B cell (primary cell): ENCODE measurements at regions of chr19 and their contacts with region 1.

Region 1: GRCh38 chr19:20923077-20923871 is at the start of gene ZNF85:
- DNase-seq: peak; percentile 92
- ATAC-seq: peak; percentile 98
- H3K4me3 ChIP-seq: peak within 1 kb of the TSS; percentile 48 to 84 (median 69)
- H3K4me3 Mint-ChIP-seq: peak within 1 kb of the TSS; percentile 98
- H3K27ac ChIP-seq: peak within 1 kb of the TSS; percentile 90 to 92
- H3K27ac Mint-ChIP-seq: peak within 1 kb of the TSS; percentile 96
- H3K4me1 ChIP-seq: peaks cover 4 to 9% of the 10 kb centered on the region in 2 donors
- H3K4me1 Mint-ChIP-seq: peaks cover 16% of the 10 kb centered on the region
- H3K27me3 ChIP-seq: no peaks in the 10 kb centered on the region
- H3K27me3 Mint-ChIP-seq: no peaks in the 10 kb centered on the region
- CTCF ChIP-seq: no peak
- total RNA-seq, gene ZNF85: 17.1 and 20.5 TPM in 2 replicates

Region 2: DNA sequence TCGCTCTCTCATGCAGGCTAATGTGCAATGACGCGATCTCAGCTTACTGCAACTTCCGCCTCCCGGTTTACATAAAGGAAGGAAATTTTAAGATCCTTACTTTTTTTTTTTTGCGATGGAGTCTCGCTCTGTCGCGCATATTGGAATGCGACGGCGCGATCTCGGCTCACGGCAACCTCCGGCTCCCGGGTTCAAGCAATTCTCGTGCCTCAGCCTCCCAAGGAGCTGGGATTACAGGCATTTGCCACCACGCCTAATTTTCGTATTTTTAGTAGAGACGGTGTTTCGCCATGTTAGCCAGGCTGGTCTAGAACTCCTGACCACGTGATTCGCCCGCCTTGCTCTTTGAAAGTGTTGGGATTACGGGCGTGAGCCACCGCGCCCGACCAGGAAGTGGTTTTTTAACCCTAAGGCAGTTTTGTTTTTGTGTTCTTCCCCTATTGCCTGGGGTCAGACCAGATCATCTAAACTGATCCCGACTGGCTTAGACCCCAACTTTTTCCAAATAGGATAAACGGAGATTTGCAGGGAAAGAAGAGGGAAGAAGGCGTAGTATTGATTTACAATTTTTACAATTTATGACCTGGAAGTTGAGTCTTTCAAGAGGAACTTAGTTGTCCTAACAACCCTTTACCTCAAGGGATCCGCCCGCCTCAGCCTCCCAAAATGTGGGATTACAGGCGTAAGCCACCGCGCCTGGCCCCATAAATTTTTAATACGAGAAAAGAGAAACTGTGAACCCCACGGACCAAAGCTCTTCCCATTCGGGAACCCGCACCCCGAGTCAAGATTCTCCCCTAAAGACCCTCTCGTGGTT is 499.7 kb before region 1 on chr19:
- CTCF ChIA-PET with region 1: interaction called, 3 read pairs
- POLR2A ChIA-PET with region 1: no interaction called
- intact Hi-C with region 1: loop called (anchors 5 kb)
- DNase-seq: peak; percentile 62
- ATAC-seq: no peak
- H3K4me3 ChIP-seq: peak overlapping the region; percentile 74 to 100 (median 84)
- H3K4me3 Mint-ChIP-seq: peak overlapping the region; percentile 97
- H3K27ac ChIP-seq: peak overlapping the region; percentile 54 to 77
- H3K27ac Mint-ChIP-seq: peak overlapping the region; percentile 98
- H3K4me1 ChIP-seq: peaks cover 0 to 7% of the 10 kb centered on the region in 2 donors
- H3K4me1 Mint-ChIP-seq: peaks cover 11% of the 10 kb centered on the region
- H3K27me3 ChIP-seq: no peaks in the 10 kb centered on the region
- H3K27me3 Mint-ChIP-seq: no peaks in the 10 kb centered on the region
- CTCF ChIP-seq: no peak

Region 3: GRCh38 chr19:20661150-20661819 is 262.0 kb before region 1 on chr19 and contains the start of gene ZNF626:
- CTCF ChIA-PET with region 1: no interaction called
- POLR2A ChIA-PET with region 1: no interaction called
- intact Hi-C with region 1: loop called (anchors 1 kb)
- DNase-seq: peak; percentile 97
- ATAC-seq: peak; percentile 99
- H3K4me3 ChIP-seq: peak within 1 kb of the TSS; percentile 61 to 85 (median 77)
- H3K4me3 Mint-ChIP-seq: peak within 1 kb of the TSS; percentile 95
- H3K27ac ChIP-seq: peak within 1 kb of the TSS; percentile 85 to 91
- H3K27ac Mint-ChIP-seq: peak within 1 kb of the TSS; percentile 97
- H3K4me1 ChIP-seq: peaks cover 22 to 33% of the 10 kb centered on the region in 2 donors
- H3K4me1 Mint-ChIP-seq: peaks cover 41% of the 10 kb centered on the region
- H3K27me3 ChIP-seq: no peaks in the 10 kb centered on the region
- H3K27me3 Mint-ChIP-seq: no peaks in the 10 kb centered on the region
- CTCF ChIP-seq: no peak
- total RNA-seq, gene ZNF626: 15.2 and 17.6 TPM in 2 replicates

Region 4: DNA sequence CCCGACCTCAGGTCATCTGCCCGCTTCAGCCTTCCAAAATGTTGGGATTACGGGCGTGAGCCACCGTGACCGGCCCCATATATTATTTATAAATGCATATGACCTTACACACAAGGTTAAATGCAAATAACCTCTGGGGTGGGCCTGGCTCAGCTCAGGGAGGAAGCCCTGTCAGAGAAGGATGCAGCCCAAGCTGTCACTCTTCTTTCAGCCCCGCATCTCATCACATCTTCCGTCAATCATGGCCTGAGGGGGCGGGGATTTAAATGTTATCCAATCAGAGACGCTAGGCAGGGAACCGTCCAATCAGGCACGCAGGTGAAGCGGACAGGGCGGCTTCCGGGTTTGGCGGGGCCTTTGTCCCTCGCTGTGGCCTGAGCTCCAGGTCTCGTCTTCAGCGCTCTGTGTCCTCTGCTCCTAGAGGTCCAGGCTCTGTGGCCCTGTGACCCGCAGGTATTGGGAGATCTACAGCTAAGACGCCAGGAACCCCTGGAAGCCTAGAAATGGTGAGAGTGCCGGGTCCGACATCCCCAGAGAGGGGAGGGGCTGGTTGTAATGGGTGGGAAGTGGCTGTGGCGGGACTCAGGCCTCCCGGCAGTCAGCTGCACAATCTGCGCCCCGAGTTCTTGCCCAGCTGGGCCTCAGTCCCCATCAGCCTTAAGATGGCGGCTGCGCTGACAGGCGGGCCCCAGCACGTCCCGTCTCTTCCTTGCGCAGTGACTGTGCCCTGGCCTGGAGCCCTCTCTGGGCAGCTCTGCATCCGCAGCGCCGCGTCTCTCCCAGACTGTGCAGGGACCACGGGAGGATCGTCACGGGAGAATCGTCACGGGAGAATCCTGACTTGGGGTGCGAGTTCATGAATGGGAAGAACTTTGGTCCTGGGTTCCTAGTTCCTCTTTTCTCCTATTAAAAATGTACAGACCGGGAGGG is 97.3 kb after region 1 on chr19 and contains the start of gene ZNF430:
- CTCF ChIA-PET with region 1: no interaction called
- POLR2A ChIA-PET with region 1: no interaction called
- intact Hi-C with region 1: loop called (anchors 5 kb)
- DNase-seq: peak; percentile 96
- ATAC-seq: peak; percentile 98
- H3K4me3 ChIP-seq: peak within 1 kb of the TSS; percentile 77 to 98 (median 91)
- H3K4me3 Mint-ChIP-seq: peak within 1 kb of the TSS; percentile 99
- H3K27ac ChIP-seq: peak within 1 kb of the TSS; percentile 95 to 98
- H3K27ac Mint-ChIP-seq: peak within 1 kb of the TSS; percentile 99
- H3K4me1 ChIP-seq: peaks cover 19 to 23% of the 10 kb centered on the region in 2 donors
- H3K4me1 Mint-ChIP-seq: peaks cover 41% of the 10 kb centered on the region
- H3K27me3 ChIP-seq: no peaks in the 10 kb centered on the region
- H3K27me3 Mint-ChIP-seq: no peaks in the 10 kb centered on the region
- CTCF ChIP-seq: no peak
- total RNA-seq, gene ZNF430: 45.4 and 45.5 TPM in 2 replicates

Region 5: GRCh38 chr19:21141787-21142464 is 218.7 kb after region 1 on chr19 and contains the start of gene ZNF431:
- CTCF ChIA-PET with region 1: no interaction called
- POLR2A ChIA-PET with region 1: no interaction called
- intact Hi-C with region 1: loop called (anchors 1 kb)
- DNase-seq: peak; percentile 92
- ATAC-seq: peak; percentile 99
- H3K4me3 ChIP-seq: peak within 1 kb of the TSS; percentile 38 to 90 (median 78)
- H3K4me3 Mint-ChIP-seq: peak within 1 kb of the TSS; percentile 98
- H3K27ac ChIP-seq: peak within 1 kb of the TSS; percentile 80
- H3K27ac Mint-ChIP-seq: peak within 1 kb of the TSS; percentile 95
- H3K4me1 ChIP-seq: peaks cover 6 to 10% of the 10 kb centered on the region in 2 donors
- H3K4me1 Mint-ChIP-seq: peaks cover 27% of the 10 kb centered on the region
- H3K27me3 ChIP-seq: no peaks in the 10 kb centered on the region
- H3K27me3 Mint-ChIP-seq: no peaks in the 10 kb centered on the region
- CTCF ChIP-seq: no peak
- total RNA-seq, gene ZNF431: 40.7 and 50.0 TPM in 2 replicates